CD4-positive, alpha-beta T cell (primary cell): ENCODE measurements at regions of chr10 and their contacts with region 1.

Region 1: GRCh38 chr10:71708301-71708703 is 11.3 kb downstream of the C10orf105 start:
- DNase-seq: peak; percentile 50 to 82 (median 63)
- ATAC-seq: peak; percentile 76
- H3K4me3 ChIP-seq: no peak overlapping the region
- H3K4me3 Mint-ChIP-seq: no peak overlapping the region
- H3K27ac ChIP-seq: no peak overlapping the region
- H3K27ac Mint-ChIP-seq: peak overlapping the region; percentile 5
- H3K4me1 ChIP-seq: peaks cover 48% of the 10 kb centered on the region
- H3K4me1 Mint-ChIP-seq: peaks cover 51% of the 10 kb centered on the region
- H3K27me3 ChIP-seq: no peaks in the 10 kb centered on the region
- H3K27me3 Mint-ChIP-seq: no peaks in the 10 kb centered on the region
- CTCF ChIP-seq: peak; percentile 85

Region 2: DNA sequence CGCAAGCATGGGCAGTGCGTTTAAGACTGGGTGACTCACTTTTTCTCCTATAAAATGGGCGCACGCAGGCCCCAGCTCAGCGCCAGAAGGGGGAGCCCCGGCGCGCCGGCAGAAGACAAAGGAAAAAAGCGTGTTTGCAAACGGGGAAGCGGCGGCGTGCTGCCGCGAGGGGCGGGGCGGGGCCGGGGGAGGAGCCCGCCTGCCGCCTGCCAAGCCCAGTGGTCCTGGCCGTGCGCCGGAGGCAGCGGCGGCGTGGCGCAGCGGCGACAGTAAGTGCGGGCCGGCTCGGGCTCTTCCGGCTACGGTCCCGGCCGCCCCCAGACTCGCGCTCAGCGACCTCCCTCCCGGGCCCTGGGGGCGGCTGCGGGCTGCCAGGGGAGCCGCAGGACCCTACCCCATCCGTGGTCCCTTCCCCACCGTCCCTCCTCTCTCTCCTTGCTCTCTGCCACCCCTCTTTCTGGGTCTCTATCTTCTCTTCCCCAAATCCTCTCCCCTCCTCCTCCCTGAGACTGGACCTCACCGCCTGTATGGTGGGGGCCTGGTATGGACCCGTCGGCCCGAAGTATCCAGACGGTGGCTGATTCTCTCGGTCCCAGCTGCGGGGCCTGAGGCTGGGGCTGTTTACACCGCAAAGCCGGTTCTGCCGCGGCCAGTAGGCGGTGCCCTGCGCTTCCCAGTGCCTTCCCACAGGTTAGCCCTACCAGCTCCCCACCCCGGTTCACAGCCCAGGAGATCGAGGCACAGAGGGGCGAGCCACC is 389.1 kb before region 1 on chr10 and contains the start of gene SLC29A3:
- CTCF ChIA-PET with region 1: interaction called, 11 read pairs
- POLR2A ChIA-PET with region 1: interaction called, 4 read pairs
- intact Hi-C with region 1: loop called (anchors 5 kb)
- DNase-seq: peak; percentile 69 to 93 (median 79)
- ATAC-seq: peak; percentile 86
- H3K4me3 ChIP-seq: peak within 1 kb of the TSS; percentile 88
- H3K4me3 Mint-ChIP-seq: peak within 1 kb of the TSS; percentile 97
- H3K27ac ChIP-seq: no peak within 1 kb of the TSS
- H3K27ac Mint-ChIP-seq: peak within 1 kb of the TSS; percentile 66
- H3K4me1 ChIP-seq: peaks cover 32% of the 10 kb centered on the region
- H3K4me1 Mint-ChIP-seq: peaks cover 31% of the 10 kb centered on the region
- H3K27me3 ChIP-seq: no peaks in the 10 kb centered on the region
- H3K27me3 Mint-ChIP-seq: no peaks in the 10 kb centered on the region
- CTCF ChIP-seq: peak; percentile 56
- total RNA-seq, gene SLC29A3: 2.3 to 2.5 TPM

Region 3: GRCh38 chr10:71696628-71697326 is 11.5 kb before region 1 on chr10:
- CTCF ChIA-PET with region 1: interaction called, 10 read pairs
- POLR2A ChIA-PET with region 1: interaction called, 6 read pairs
- intact Hi-C with region 1: no loop called
- DNase-seq: peak; percentile 54 to 84 (median 66)
- ATAC-seq: peak; percentile 83
- H3K4me3 ChIP-seq: no peak overlapping the region
- H3K4me3 Mint-ChIP-seq: no peak overlapping the region
- H3K27ac ChIP-seq: no peak overlapping the region
- H3K27ac Mint-ChIP-seq: peak overlapping the region; percentile 33
- H3K4me1 ChIP-seq: peaks cover 65% of the 10 kb centered on the region
- H3K4me1 Mint-ChIP-seq: peaks cover 29% of the 10 kb centered on the region
- H3K27me3 ChIP-seq: no peaks in the 10 kb centered on the region
- H3K27me3 Mint-ChIP-seq: no peaks in the 10 kb centered on the region
- CTCF ChIP-seq: peak; percentile 70

Region 4: DNA sequence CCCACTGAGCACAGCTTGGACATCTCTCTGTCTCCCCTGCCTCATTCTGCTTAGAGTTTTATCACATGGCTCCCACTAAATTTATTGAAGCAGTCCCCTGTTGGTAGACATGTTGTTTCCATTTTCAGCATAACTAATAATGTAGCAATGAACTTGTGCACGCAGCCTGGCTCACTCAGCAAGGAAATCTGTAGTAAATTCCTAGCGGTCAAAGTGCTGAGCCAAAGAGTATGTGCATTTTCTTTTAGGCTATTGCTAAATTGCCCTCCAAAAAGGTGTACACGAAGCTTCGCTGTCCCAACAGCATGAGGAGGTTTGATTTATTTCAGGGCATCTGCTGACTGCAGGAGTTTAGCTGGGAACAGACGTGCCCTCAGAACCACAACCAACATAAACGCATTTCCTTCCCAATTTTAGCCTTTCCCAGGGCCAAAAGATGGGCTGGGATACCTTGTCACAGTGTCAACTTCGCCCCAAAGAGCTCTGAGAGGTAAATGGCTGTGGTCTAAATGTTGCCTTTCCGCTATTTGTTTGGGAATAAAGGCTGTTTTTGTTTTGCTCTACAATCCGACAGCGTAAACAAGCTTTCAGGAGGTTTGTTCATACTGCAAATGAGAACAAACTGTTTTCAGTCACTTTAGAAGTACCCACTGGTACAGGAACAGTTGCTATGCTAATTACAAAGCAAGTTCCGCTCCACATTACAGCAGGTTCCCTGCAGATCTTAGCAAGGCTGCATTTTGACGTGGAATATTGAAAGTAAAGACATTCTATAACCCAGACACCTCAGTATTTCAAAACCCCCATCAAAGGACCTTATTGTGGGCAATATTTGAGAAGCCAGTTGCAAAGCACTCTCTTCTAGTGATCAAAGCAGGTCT is 48.2 kb after region 1 on chr10:
- CTCF ChIA-PET with region 1: interaction called, 7 read pairs
- POLR2A ChIA-PET with region 1: interaction called, 16 read pairs
- intact Hi-C with region 1: no loop called
- DNase-seq: peak in 4 of 14 experiments; percentile 41 to 75 (median 72)
- ATAC-seq: peak; percentile 82
- H3K4me3 ChIP-seq: peak overlapping the region; percentile 18
- H3K4me3 Mint-ChIP-seq: peak overlapping the region; percentile 66
- H3K27ac ChIP-seq: peak overlapping the region; percentile 86 to 87
- H3K27ac Mint-ChIP-seq: peak overlapping the region; percentile 93
- H3K4me1 ChIP-seq: peaks cover 94% of the 10 kb centered on the region
- H3K4me1 Mint-ChIP-seq: peaks cover 88% of the 10 kb centered on the region
- H3K27me3 ChIP-seq: no peaks in the 10 kb centered on the region
- H3K27me3 Mint-ChIP-seq: no peaks in the 10 kb centered on the region
- CTCF ChIP-seq: no peak

Region 5: GRCh38 chr10:71812016-71812912 is 104.0 kb after region 1 on chr10:
- CTCF ChIA-PET with region 1: interaction called, 11 read pairs
- POLR2A ChIA-PET with region 1: interaction called, 3 read pairs
- intact Hi-C with region 1: loop called (anchors 1 to 5 kb)
- DNase-seq: peak; percentile 64 to 89 (median 76)
- ATAC-seq: peak; percentile 91
- H3K4me3 ChIP-seq: no peak overlapping the region
- H3K4me3 Mint-ChIP-seq: no peak overlapping the region
- H3K27ac ChIP-seq: no peak overlapping the region
- H3K27ac Mint-ChIP-seq: no peak overlapping the region
- H3K4me1 ChIP-seq: peaks cover 8% of the 10 kb centered on the region
- H3K4me1 Mint-ChIP-seq: no peaks in the 10 kb centered on the region
- H3K27me3 ChIP-seq: no peaks in the 10 kb centered on the region
- H3K27me3 Mint-ChIP-seq: no peaks in the 10 kb centered on the region
- CTCF ChIP-seq: peak; percentile 81